IMR-90 (cell line): ENCODE measurements at regions of chr1 and their contacts with region 1.

Region 1: GRCh38 chr1:209692745-209693504 is 11.7 kb upstream of the HSD11B1 start:
- DNase-seq: peak; percentile 83
- ATAC-seq: peak; percentile 86
- H3K4me3 ChIP-seq: no peak overlapping the region
- H3K27ac ChIP-seq: no peak overlapping the region
- H3K4me1 ChIP-seq: peaks cover 5% of the 10 kb centered on the region; the same call in 1 of the 2 replicates
- H3K27me3 ChIP-seq: peaks cover 3% of the 10 kb centered on the region
- CTCF ChIP-seq: peak; percentile 92
- POLR2A ChIP-seq: no peak
- RAD21 ChIP-seq: peak; percentile 91

Region 2: DNA sequence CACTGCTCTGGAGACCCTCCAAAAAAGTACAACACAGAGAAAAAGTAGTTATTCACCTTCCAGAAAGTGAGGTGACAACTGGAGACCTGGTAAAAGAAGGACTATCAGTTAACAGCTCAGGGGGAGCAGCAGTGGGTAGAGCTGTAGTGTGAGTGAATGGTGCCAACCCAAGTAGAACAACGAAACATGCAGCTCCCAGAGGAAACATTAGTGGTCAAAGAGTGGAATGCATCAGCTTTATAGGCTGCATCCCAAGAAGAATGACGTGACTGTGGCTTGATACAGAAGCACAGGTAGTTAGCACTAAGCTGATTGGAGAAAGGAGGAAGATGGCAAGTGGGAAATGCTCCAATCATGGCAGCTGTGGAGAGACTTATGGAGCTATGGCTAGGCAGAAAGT is 385.1 kb before region 1 on chr1:
- CTCF ChIA-PET with region 1: no interaction called
- POLR2A ChIA-PET with region 1: no interaction called
- dilution Hi-C with region 1: no loop called
- in situ Hi-C with region 1: no loop called
- intact Hi-C with region 1: no loop called
- DNase-seq: no peak
- ATAC-seq: no peak
- H3K4me3 ChIP-seq: no peak overlapping the region
- H3K27ac ChIP-seq: no peak overlapping the region
- H3K4me1 ChIP-seq: no peaks in the 10 kb centered on the region
- H3K27me3 ChIP-seq: peaks cover 1% of the 10 kb centered on the region; the same call in 1 of the 2 replicates
- CTCF ChIP-seq: no peak
- POLR2A ChIP-seq: no peak
- RAD21 ChIP-seq: no peak

Region 3: DNA sequence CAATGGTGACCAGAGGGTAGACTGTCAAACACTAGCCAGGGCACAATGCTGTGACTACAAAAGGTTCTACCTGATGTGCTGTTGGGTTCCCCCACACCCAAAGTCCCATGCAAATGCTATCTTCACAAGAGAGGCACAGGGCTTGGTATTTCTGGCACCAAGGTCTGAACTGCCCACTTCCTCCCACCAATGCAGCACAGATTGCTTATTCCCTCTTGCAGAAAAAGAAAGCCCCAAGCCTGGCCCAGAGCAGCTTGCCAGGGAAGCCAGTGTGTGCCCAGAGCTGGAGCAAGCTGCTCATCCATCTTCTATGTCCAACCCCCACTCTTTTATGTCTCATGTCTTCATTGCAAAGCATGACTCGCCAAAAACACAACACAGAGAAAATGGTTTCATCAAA is 258.9 kb before region 1 on chr1:
- CTCF ChIA-PET with region 1: no interaction called
- POLR2A ChIA-PET with region 1: no interaction called
- dilution Hi-C with region 1: no loop called
- in situ Hi-C with region 1: no loop called
- intact Hi-C with region 1: no loop called
- DNase-seq: no peak
- ATAC-seq: no peak
- H3K4me3 ChIP-seq: no peak overlapping the region
- H3K27ac ChIP-seq: no peak overlapping the region
- H3K4me1 ChIP-seq: 0 out of 2 replicates have a peak, but pooled peaks cover 1% of the 10 kb centered on the region
- H3K27me3 ChIP-seq: peaks cover 5% of the 10 kb centered on the region
- CTCF ChIP-seq: no peak
- POLR2A ChIP-seq: no peak
- RAD21 ChIP-seq: no peak

Region 4: GRCh38 chr1:209565759-209566678 is 126.9 kb before region 1 on chr1:
- CTCF ChIA-PET with region 1: interaction called, 16 read pairs
- POLR2A ChIA-PET with region 1: no interaction called
- dilution Hi-C with region 1: no loop called
- in situ Hi-C with region 1: no loop called
- intact Hi-C with region 1: no loop called
- DNase-seq: peak; percentile 75
- ATAC-seq: peak; percentile 98
- H3K4me3 ChIP-seq: no peak overlapping the region
- H3K27ac ChIP-seq: no peak overlapping the region
- H3K4me1 ChIP-seq: no peaks in the 10 kb centered on the region
- H3K27me3 ChIP-seq: peaks cover 19% of the 10 kb centered on the region
- CTCF ChIP-seq: peak; percentile 73
- POLR2A ChIP-seq: no peak
- RAD21 ChIP-seq: peak; percentile 58

Region 5: GRCh38 chr1:209576798-209577197 is 116.1 kb before region 1 on chr1:
- CTCF ChIA-PET with region 1: interaction called, 4 read pairs
- POLR2A ChIA-PET with region 1: no interaction called
- dilution Hi-C with region 1: no loop called
- in situ Hi-C with region 1: loop called (anchors 5 kb)
- intact Hi-C with region 1: loop called (anchors 1 kb)
- DNase-seq: peak; percentile 58
- ATAC-seq: peak; percentile 99
- H3K4me3 ChIP-seq: no peak overlapping the region
- H3K27ac ChIP-seq: no peak overlapping the region
- H3K4me1 ChIP-seq: no peaks in the 10 kb centered on the region
- H3K27me3 ChIP-seq: peaks cover 14% of the 10 kb centered on the region
- CTCF ChIP-seq: peak; percentile 91
- POLR2A ChIP-seq: no peak; the same call in 1 of the 2 replicates
- RAD21 ChIP-seq: peak; percentile 89

Region 6: GRCh38 chr1:209601809-209602657 is 90.9 kb before region 1 on chr1:
- CTCF ChIA-PET with region 1: interaction called, 3 read pairs
- POLR2A ChIA-PET with region 1: no interaction called
- dilution Hi-C with region 1: no loop called
- in situ Hi-C with region 1: no loop called
- intact Hi-C with region 1: loop called (anchors 1 kb)
- DNase-seq: peak; percentile 45
- ATAC-seq: peak; percentile 85
- H3K4me3 ChIP-seq: no peak overlapping the region
- H3K27ac ChIP-seq: no peak overlapping the region
- H3K4me1 ChIP-seq: no peaks in the 10 kb centered on the region
- H3K27me3 ChIP-seq: no peaks in the 10 kb centered on the region; the same call in 1 of the 2 replicates
- CTCF ChIP-seq: peak; percentile 60
- POLR2A ChIP-seq: no peak
- RAD21 ChIP-seq: peak; percentile 65

Region 7: GRCh38 chr1:209617755-209618154 is 75.2 kb before region 1 on chr1:
- CTCF ChIA-PET with region 1: no interaction called
- POLR2A ChIA-PET with region 1: no interaction called
- dilution Hi-C with region 1: no loop called
- in situ Hi-C with region 1: no loop called
- intact Hi-C with region 1: no loop called
- DNase-seq: no peak
- ATAC-seq: no peak
- H3K4me3 ChIP-seq: no peak overlapping the region
- H3K27ac ChIP-seq: no peak overlapping the region
- H3K4me1 ChIP-seq: no peaks in the 10 kb centered on the region
- H3K27me3 ChIP-seq: no peaks in the 10 kb centered on the region
- CTCF ChIP-seq: no peak
- POLR2A ChIP-seq: no peak
- RAD21 ChIP-seq: no peak

Region 8: GRCh38 chr1:209627732-209628196 is 65.2 kb before region 1 on chr1:
- CTCF ChIA-PET with region 1: no interaction called
- POLR2A ChIA-PET with region 1: no interaction called
- dilution Hi-C with region 1: no loop called
- in situ Hi-C with region 1: no loop called
- intact Hi-C with region 1: loop called (anchors 1 kb)
- DNase-seq: peak; percentile 69
- ATAC-seq: peak; percentile 96
- H3K4me3 ChIP-seq: no peak overlapping the region
- H3K27ac ChIP-seq: no peak overlapping the region
- H3K4me1 ChIP-seq: no peaks in the 10 kb centered on the region; the same call in none of the 2 replicates
- H3K27me3 ChIP-seq: no peaks in the 10 kb centered on the region
- CTCF ChIP-seq: peak; percentile 82
- POLR2A ChIP-seq: no peak
- RAD21 ChIP-seq: peak; percentile 78

Region 9: GRCh38 chr1:209648931-209649776 is 43.8 kb before region 1 on chr1:
- CTCF ChIA-PET with region 1: no interaction called
- POLR2A ChIA-PET with region 1: no interaction called
- dilution Hi-C with region 1: no loop called
- in situ Hi-C with region 1: no loop called
- intact Hi-C with region 1: loop called (anchors 1 kb)
- DNase-seq: peak; percentile 96
- ATAC-seq: peak; percentile 75
- H3K4me3 ChIP-seq: no peak overlapping the region
- H3K27ac ChIP-seq: peak overlapping the region; percentile 84
- H3K4me1 ChIP-seq: peaks cover 25% of the 10 kb centered on the region
- H3K27me3 ChIP-seq: no peaks in the 10 kb centered on the region; the same call in 1 of the 2 replicates
- CTCF ChIP-seq: no peak
- POLR2A ChIP-seq: no peak
- RAD21 ChIP-seq: no peak

Region 10: DNA sequence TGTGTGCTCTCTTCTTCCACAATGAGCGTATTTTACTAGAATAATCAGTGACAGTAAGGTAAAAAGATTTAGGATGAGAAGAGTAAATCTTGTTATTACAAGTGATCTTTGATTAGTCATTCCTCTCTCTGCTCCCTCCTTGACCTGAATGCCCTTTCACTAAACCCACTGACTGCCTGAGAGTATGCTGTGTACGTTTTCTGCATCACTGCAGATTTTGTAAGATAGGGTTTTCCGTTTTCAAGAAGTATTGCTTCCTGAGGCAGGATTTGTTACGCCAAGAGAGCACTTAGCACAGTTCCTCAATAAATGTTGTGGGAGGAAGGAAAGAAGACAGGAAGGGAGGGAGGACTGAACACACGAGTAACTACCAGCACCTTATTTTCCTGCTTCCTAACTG is 33.0 kb before region 1 on chr1:
- CTCF ChIA-PET with region 1: no interaction called
- POLR2A ChIA-PET with region 1: no interaction called
- dilution Hi-C with region 1: no loop called
- in situ Hi-C with region 1: no loop called
- intact Hi-C with region 1: no loop called
- DNase-seq: peak; percentile 46
- ATAC-seq: no peak; the same call in 1 of the 2 replicates
- H3K4me3 ChIP-seq: no peak overlapping the region
- H3K27ac ChIP-seq: no peak overlapping the region
- H3K4me1 ChIP-seq: no peaks in the 10 kb centered on the region
- H3K27me3 ChIP-seq: no peaks in the 10 kb centered on the region
- CTCF ChIP-seq: no peak
- POLR2A ChIP-seq: no peak
- RAD21 ChIP-seq: no peak

Region 11: DNA sequence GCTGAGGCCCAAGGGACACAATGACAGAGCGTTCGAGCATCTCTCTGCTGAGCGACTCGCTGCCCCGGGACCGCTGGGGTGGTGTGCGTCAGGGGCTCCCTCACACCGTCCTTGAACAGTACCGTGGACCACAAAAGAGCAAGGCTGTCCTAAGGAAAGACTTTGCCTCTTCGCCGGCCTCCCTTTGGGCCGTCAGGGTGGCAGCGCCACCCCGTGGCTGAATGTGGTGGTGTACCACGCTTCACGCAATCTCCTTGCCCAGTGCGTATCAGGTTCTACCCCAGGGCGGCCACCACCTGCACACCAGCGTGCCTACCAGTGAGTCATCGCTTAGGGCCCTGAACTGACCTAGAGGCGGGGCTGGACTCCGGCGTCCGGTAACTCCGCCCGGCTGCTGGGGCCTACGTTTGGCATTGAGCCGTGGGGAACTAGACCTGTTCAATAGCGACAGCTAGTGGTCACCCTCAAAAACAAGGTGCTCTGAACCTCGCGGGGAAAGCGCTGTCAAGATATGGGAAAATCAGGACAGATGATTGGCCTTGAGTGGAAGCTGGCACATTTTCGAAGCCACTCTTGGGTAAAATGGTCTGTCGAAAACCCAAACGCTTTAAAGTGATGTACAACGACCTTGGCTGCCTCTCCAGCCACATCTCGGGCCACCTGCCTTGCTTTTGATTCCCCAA is 54.8 kb after region 1 on chr1:
- CTCF ChIA-PET with region 1: no interaction called
- POLR2A ChIA-PET with region 1: no interaction called
- dilution Hi-C with region 1: no loop called
- in situ Hi-C with region 1: no loop called
- intact Hi-C with region 1: loop called (anchors 1 kb)
- DNase-seq: peak; percentile 89
- ATAC-seq: peak; percentile 94
- H3K4me3 ChIP-seq: peak overlapping the region; percentile 6; the same call in 1 of the 2 replicates
- H3K27ac ChIP-seq: no peak overlapping the region
- H3K4me1 ChIP-seq: peaks cover 3% of the 10 kb centered on the region; the same call in 1 of the 2 replicates
- H3K27me3 ChIP-seq: 0 out of 2 replicates have a peak, but pooled peaks cover 1% of the 10 kb centered on the region
- CTCF ChIP-seq: peak; percentile 65
- POLR2A ChIP-seq: no peak
- RAD21 ChIP-seq: peak; percentile 43